ENCODE measurements at regions of chr1 and their contacts with region 1.

Region 1: DNA sequence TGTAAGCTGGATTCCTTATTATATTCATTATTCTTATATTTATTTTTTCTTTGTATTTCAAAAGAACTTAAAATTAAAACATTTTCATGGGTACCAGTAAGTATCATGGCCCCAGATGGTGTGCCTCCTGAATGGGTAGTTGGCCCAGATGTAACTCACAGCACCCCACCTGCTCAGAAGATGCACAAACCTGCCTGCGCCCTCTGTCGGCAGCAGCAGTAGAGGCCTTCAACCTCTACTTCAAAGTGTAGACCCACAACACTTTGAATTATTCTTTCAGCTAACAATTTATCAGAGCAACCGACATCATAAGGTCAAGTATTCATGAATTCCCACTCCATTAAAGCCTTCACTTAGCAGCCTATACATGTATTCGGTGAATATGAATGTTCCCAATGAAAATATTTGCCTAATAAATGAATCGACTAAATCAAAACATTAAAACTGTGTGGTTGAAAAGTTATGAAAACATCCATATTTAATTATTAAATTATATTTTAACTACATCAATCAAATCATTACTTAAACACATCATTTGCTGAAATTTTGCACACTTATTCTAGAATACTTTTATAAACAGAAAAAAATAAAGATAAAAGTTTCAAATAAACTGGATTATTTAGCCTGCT is 25.4 kb downstream of the PIGM start:
- DNase-seq: peak; percentile 86
- ATAC-seq: peak; percentile 95
- H3K4me3 Mint-ChIP-seq: no peak overlapping the region
- H3K27ac Mint-ChIP-seq: no peak overlapping the region
- H3K4me1 Mint-ChIP-seq: no peaks in the 10 kb centered on the region
- H3K27me3 Mint-ChIP-seq: peaks cover 8% of the 10 kb centered on the region; the same call in 1 of the 2 replicates
- CTCF ChIP-seq: peak; percentile 93

Region 2: DNA sequence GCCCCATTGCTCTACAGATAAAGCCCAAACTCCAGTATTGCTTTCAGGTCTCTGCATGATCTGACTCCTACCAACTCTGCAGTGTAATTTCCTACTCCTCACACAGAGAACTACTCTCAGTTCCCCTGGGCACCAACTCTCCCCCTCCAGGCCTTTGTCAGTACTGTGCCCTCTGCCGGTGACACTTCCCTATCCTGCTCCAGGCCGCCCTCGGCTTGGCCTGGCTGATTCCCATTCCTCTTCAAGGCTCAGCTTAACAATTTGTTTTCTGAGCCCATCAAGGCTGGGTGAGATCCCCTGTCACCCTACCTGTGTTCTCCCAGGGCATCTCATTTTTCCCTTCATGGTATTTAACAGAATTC is 177.2 kb before region 1 on chr1:
- CTCF ChIA-PET with region 1: interaction called, 35 read pairs
- POLR2A ChIA-PET with region 1: no interaction called
- DNase-seq: peak; percentile 67
- ATAC-seq: peak; percentile 96
- H3K4me3 Mint-ChIP-seq: no peak overlapping the region
- H3K27ac Mint-ChIP-seq: no peak overlapping the region; the same call in 1 of the 2 replicates
- H3K4me1 Mint-ChIP-seq: peaks cover 5% of the 10 kb centered on the region
- H3K27me3 Mint-ChIP-seq: peaks cover 22% of the 10 kb centered on the region
- CTCF ChIP-seq: peak; percentile 18; the same call in 1 of the 2 replicates

Region 3: DNA sequence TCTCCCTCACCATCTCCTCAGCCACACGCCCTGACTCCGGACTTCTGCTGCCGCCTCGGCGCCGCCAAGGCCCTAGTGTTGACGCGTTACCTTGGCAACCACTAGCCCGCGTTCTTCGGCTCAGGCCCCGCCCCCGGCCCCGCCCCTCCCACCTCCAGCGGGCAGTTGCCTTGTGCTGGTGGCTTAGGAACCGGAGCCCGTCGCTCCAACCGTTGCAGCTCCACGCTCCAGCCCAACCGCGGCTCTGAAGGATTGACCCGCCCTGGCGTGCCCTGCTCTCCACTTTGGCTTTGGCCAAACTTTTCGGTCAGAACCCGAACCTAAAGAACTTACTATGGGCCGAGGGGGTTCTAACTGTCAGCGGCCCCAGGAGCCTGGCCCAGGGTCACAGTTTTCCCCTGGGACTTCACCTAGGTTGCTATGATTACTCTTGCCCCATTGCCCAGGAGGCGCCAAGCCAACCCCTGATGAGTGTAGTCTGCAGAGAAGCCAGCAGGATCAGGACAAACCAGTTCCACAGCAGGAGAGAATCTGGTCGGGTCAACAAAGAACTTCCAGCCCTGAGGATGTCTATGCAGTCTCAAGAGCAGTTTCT is 106.2 kb before region 1 on chr1 and contains the start of gene CFAP45:
- CTCF ChIA-PET with region 1: interaction called, 188 read pairs
- POLR2A ChIA-PET with region 1: no interaction called
- DNase-seq: peak; percentile 92
- ATAC-seq: peak; percentile 96
- H3K4me3 Mint-ChIP-seq: peak within 1 kb of the TSS; percentile 55
- H3K27ac Mint-ChIP-seq: peak within 1 kb of the TSS; percentile 1; the same call in 1 of the 2 replicates
- H3K4me1 Mint-ChIP-seq: peaks cover 15% of the 10 kb centered on the region
- H3K27me3 Mint-ChIP-seq: peaks cover 31% of the 10 kb centered on the region
- CTCF ChIP-seq: no peak
- total RNA-seq, gene CFAP45: 0.27 to 0.48 TPM (median 0.48 TPM) in 3 replicates

Region 4: DNA sequence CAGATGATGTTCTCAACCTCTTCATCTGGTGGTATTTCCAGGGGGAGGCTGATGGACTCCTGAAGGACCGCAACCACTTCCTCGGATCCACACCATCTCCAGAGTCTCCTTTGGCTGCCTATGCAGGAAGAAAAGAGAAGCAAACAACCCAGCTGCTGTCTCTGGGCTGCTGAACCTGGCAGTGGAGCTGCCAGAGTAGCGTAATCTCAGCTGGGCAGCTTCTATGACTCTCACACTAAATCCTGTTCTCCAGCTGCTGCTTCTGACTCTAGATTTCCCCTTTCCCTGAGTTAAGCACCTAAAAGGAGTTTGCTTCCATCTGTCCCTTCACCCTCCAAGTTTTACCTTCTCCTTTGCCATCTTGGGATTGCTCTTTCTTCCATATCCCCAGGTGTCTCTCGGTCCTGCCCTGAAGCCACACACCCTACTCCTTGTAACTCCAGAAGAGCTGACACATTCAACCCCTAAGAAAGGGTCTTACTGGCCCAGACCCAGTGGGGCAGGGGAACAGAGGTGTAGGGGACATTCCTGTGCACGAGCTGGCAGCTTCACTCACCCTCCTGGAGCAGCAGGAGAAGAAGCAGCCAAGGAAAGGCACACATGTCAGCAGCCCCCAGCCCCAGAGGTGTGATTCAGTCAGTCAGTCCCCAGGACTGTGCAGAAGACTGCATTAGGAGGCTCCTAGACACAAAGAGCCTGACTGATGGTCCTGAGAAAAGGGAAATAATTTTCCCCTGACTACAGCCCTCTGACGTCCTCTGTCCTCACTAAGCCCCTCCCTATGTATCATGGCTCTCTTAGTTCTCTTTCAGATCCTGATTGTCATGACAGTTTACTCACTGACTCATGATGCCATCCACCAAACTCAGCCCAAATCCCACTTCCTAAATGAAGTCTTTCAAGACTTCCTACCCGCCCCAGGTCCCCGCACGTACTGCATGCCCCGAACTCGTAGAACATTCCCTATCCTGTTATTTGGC is 52.6 kb before region 1 on chr1 and contains the start of gene SLAMF9:
- CTCF ChIA-PET with region 1: interaction called, 32 read pairs
- POLR2A ChIA-PET with region 1: no interaction called
- DNase-seq: no peak
- ATAC-seq: no peak
- H3K4me3 Mint-ChIP-seq: no peak within 1 kb of the TSS
- H3K27ac Mint-ChIP-seq: peak within 1 kb of the TSS; percentile 9; the same call in 1 of the 2 replicates
- H3K4me1 Mint-ChIP-seq: no peaks in the 10 kb centered on the region
- H3K27me3 Mint-ChIP-seq: peaks cover 7% of the 10 kb centered on the region
- CTCF ChIP-seq: no peak
- total RNA-seq, gene SLAMF9: not detected in 3 replicates

Region 5: GRCh38 chr1:160018900-160019299 is 12.5 kb after region 1 on chr1:
- CTCF ChIA-PET with region 1: interaction called, 35 read pairs
- POLR2A ChIA-PET with region 1: no interaction called
- DNase-seq: no peak
- ATAC-seq: no peak
- H3K4me3 Mint-ChIP-seq: no peak overlapping the region
- H3K27ac Mint-ChIP-seq: no peak overlapping the region
- H3K4me1 Mint-ChIP-seq: no peaks in the 10 kb centered on the region
- H3K27me3 Mint-ChIP-seq: peaks cover 10% of the 10 kb centered on the region
- CTCF ChIP-seq: no peak

Region 6: GRCh38 chr1:160085686-160086455 is 79.4 kb after region 1 on chr1:
- CTCF ChIA-PET with region 1: interaction called, 10 read pairs
- POLR2A ChIA-PET with region 1: interaction called, 3 read pairs
- DNase-seq: peak; percentile 94
- ATAC-seq: peak; percentile 74
- H3K4me3 Mint-ChIP-seq: no peak overlapping the region
- H3K27ac Mint-ChIP-seq: no peak overlapping the region
- H3K4me1 Mint-ChIP-seq: peaks cover 19% of the 10 kb centered on the region
- H3K27me3 Mint-ChIP-seq: peaks cover 51% of the 10 kb centered on the region
- CTCF ChIP-seq: peak; percentile 92

Region 7: DNA sequence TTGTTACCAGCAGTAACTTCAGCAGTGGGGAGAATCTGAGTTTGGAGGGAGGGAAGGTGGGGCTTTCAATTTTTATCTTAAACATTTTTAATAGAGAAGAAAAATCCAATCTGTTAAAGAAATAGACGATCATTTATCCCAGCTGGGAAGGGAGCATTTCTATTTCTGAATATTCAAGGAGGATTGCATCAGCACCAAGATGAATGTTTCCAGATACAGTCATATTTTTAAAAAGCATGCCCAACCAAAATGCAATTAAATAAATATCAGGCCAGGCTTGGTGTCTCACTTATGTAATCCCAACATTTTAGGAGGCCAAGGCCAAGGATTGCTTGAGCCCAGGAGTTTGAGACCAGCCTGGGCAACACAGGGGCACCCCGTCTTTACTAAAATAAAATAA is 143.3 kb after region 1 on chr1:
- CTCF ChIA-PET with region 1: no interaction called
- POLR2A ChIA-PET with region 1: no interaction called
- DNase-seq: no peak
- ATAC-seq: no peak
- H3K4me3 Mint-ChIP-seq: no peak overlapping the region
- H3K27ac Mint-ChIP-seq: no peak overlapping the region
- H3K4me1 Mint-ChIP-seq: peaks cover 5% of the 10 kb centered on the region
- H3K27me3 Mint-ChIP-seq: no peaks in the 10 kb centered on the region; the same call in 1 of the 2 replicates
- CTCF ChIP-seq: no peak